Activated CD8-positive, alpha-beta memory T cell treated with anti-CD3 and anti-CD28 coated beads, Interleukin-2, amount 10 ng/mL, durations not matched to agents 7 days and 5 days (primary cell): ENCODE measurements at regions of chr19 and their contacts with region 1.

Region 1: GRCh38 chr19:7868676-7869452 is 5.3 kb downstream of the PRR36 start:
- DNase-seq: peak; percentile 84
- ATAC-seq: peak; percentile 81
- H3K4me3 Mint-ChIP-seq: peak overlapping the region; percentile 60
- H3K27ac Mint-ChIP-seq: peak overlapping the region; percentile 28
- H3K4me1 Mint-ChIP-seq: peaks cover 37% of the 10 kb centered on the region
- H3K27me3 Mint-ChIP-seq: peaks cover 60% of the 10 kb centered on the region

Region 2: GRCh38 chr19:7852851-7853769 is 15.8 kb before region 1 on chr19:
- CTCF ChIA-PET with region 1: interaction called, 16 read pairs
- DNase-seq: peak; percentile 75
- ATAC-seq: peak; percentile 82
- H3K4me3 Mint-ChIP-seq: no peak overlapping the region
- H3K27ac Mint-ChIP-seq: no peak overlapping the region
- H3K4me1 Mint-ChIP-seq: no peaks in the 10 kb centered on the region
- H3K27me3 Mint-ChIP-seq: no peaks in the 10 kb centered on the region

Region 3: DNA sequence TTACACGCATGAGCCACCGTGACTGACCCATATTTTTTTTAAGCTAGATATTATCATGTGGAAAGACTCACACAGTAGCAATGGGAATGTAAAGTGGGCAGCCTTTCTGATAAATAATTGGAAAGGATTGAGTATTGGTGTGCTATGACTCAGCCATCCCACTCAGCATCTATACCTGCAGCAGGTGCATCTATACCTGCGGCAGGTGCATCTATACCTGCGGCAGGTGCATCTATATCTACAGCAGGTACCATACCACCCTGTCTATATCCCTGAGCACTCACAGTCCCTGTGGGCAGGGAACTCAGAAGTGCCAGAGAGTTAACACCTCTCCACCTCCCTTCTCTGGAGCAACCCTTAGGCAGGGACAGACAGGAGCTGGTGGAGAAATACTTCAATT is 14.2 kb after region 1 on chr19:
- CTCF ChIA-PET with region 1: interaction called, 10 read pairs
- DNase-seq: no peak
- ATAC-seq: no peak
- H3K4me3 Mint-ChIP-seq: no peak overlapping the region
- H3K27ac Mint-ChIP-seq: no peak overlapping the region
- H3K4me1 Mint-ChIP-seq: no peaks in the 10 kb centered on the region
- H3K27me3 Mint-ChIP-seq: peaks cover 10% of the 10 kb centered on the region

Region 4: DNA sequence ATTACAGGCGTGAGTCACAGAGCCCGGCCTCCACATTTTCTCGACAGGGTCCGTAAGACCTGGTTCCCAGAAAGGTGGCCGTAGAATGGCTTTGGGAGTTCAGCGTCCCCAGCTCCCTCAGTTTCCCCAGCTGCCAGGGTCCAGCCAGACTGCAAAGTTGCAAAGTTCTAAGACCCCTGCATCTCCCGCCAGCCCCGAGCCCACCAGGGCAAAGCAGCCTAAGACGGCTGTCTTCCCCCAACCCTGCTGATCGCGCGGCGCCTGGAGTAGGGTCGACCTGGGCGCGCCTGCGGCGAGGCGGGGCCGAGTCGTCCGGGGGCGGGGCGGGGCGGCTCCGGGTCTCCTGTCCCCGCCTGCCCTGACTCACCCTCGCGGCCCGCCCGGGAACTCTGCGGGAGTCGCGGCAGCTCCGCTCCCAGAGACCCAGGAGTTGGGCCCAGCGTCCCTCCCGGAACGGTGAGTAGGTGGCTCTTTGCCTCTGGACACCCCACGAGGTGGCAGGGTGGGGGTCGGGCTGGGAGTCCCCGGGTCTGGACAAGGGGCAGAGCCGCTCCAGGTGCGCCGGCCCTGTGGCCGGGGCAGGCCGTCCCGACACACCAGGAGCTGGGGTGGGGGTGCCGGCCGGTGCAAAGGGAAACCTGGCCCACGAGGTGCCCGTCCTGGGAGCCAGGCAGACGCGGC is 19.4 kb after region 1 on chr19 and contains the start of gene LRRC8E:
- CTCF ChIA-PET with region 1: interaction called, 10 read pairs
- DNase-seq: no peak
- ATAC-seq: peak; percentile 67
- H3K4me3 Mint-ChIP-seq: no peak within 1 kb of the TSS
- H3K27ac Mint-ChIP-seq: no peak within 1 kb of the TSS
- H3K4me1 Mint-ChIP-seq: no peaks in the 10 kb centered on the region
- H3K27me3 Mint-ChIP-seq: peaks cover 28% of the 10 kb centered on the region
- total RNA-seq, gene LRRC8E: not detected

Region 5: GRCh38 chr19:7903244-7904073 is 34.6 kb after region 1 on chr19 and contains the start of gene MAP2K7:
- CTCF ChIA-PET with region 1: interaction called, 13 read pairs
- DNase-seq: peak; percentile 100
- ATAC-seq: peak; percentile 89
- H3K4me3 Mint-ChIP-seq: peak within 1 kb of the TSS; percentile 86
- H3K27ac Mint-ChIP-seq: peak within 1 kb of the TSS; percentile 91
- H3K4me1 Mint-ChIP-seq: peaks cover 26% of the 10 kb centered on the region
- H3K27me3 Mint-ChIP-seq: no peaks in the 10 kb centered on the region
- total RNA-seq, gene MAP2K7: 38.0 to 41.6 TPM

Region 6: GRCh38 chr19:7919610-7920518 is 51.0 kb after region 1 on chr19 and contains the start of gene SNAPC2:
- CTCF ChIA-PET with region 1: interaction called, 41 read pairs
- DNase-seq: peak; percentile 98
- ATAC-seq: peak; percentile 78
- H3K4me3 Mint-ChIP-seq: peak within 1 kb of the TSS; percentile 83
- H3K27ac Mint-ChIP-seq: peak within 1 kb of the TSS; percentile 92
- H3K4me1 Mint-ChIP-seq: peaks cover 32% of the 10 kb centered on the region
- H3K27me3 Mint-ChIP-seq: peaks cover 28% of the 10 kb centered on the region
- total RNA-seq, gene SNAPC2: 18.0 to 24.0 TPM